Activated CD4-positive, alpha-beta T cell treated with anti-CD3 and anti-CD28 coated beads, Interleukin-2, amount 10 ng/mL, durations not matched to agents 7 days and 5 days (primary cell): ENCODE measurements at regions of chr21 and their contacts with region 1.

Region 1: GRCh38 chr21:42456457-42456856 is 39.6 kb downstream of the RSPH1 start:
- DNase-seq: peak; percentile 60
- H3K4me3 Mint-ChIP-seq: no peak overlapping the region
- H3K27ac Mint-ChIP-seq: peak overlapping the region; percentile 41
- H3K4me1 Mint-ChIP-seq: peaks cover 41% of the 10 kb centered on the region
- H3K27me3 Mint-ChIP-seq: no peaks in the 10 kb centered on the region

Region 2: GRCh38 chr21:42467140-42467983 is 10.9 kb after region 1 on chr21:
- CTCF ChIA-PET with region 1: interaction called, 18 read pairs
- POLR2A ChIA-PET with region 1: no interaction called
- DNase-seq: peak; percentile 45
- H3K4me3 Mint-ChIP-seq: no peak overlapping the region
- H3K27ac Mint-ChIP-seq: no peak overlapping the region
- H3K4me1 Mint-ChIP-seq: peaks cover 44% of the 10 kb centered on the region
- H3K27me3 Mint-ChIP-seq: peaks cover 8% of the 10 kb centered on the region